Activated naive CD4-positive, alpha-beta T cell treated with anti-CD3 and anti-CD28 coated beads for 36 hours (primary cell): ENCODE measurements at regions of chr1 and their contacts with region 1.

Region 1: GRCh38 chr1:41919764-41920397 is 1.2 kb upstream of the HIVEP3 start:
- DNase-seq: peak; percentile 91
- H3K4me3 Mint-ChIP-seq: peak overlapping the region; percentile 89
- H3K27ac Mint-ChIP-seq: peak overlapping the region; percentile 91
- H3K4me1 Mint-ChIP-seq: peaks cover 49% of the 10 kb centered on the region
- H3K27me3 Mint-ChIP-seq: no peaks in the 10 kb centered on the region

Region 2: GRCh38 chr1:41898191-41898713 is 21.6 kb before region 1 on chr1:
- CTCF ChIA-PET with region 1: interaction called, 5 read pairs
- intact Hi-C with region 1: loop called (anchors 1 kb)
- DNase-seq: peak; percentile 94
- H3K4me3 Mint-ChIP-seq: peak overlapping the region; percentile 65
- H3K27ac Mint-ChIP-seq: peak overlapping the region; percentile 92
- H3K4me1 Mint-ChIP-seq: peaks cover 59% of the 10 kb centered on the region
- H3K27me3 Mint-ChIP-seq: no peaks in the 10 kb centered on the region

Region 3: GRCh38 chr1:41936118-41936517 is 16.2 kb after region 1 on chr1:
- CTCF ChIA-PET with region 1: no interaction called
- intact Hi-C with region 1: loop called (anchors 1 kb)
- DNase-seq: peak; percentile 55
- H3K4me3 Mint-ChIP-seq: no peak overlapping the region
- H3K27ac Mint-ChIP-seq: no peak overlapping the region
- H3K4me1 Mint-ChIP-seq: peaks cover 40% of the 10 kb centered on the region
- H3K27me3 Mint-ChIP-seq: no peaks in the 10 kb centered on the region